ENCODE measurements at regions of chr17 and their contacts with region 1.

Region 1: DNA sequence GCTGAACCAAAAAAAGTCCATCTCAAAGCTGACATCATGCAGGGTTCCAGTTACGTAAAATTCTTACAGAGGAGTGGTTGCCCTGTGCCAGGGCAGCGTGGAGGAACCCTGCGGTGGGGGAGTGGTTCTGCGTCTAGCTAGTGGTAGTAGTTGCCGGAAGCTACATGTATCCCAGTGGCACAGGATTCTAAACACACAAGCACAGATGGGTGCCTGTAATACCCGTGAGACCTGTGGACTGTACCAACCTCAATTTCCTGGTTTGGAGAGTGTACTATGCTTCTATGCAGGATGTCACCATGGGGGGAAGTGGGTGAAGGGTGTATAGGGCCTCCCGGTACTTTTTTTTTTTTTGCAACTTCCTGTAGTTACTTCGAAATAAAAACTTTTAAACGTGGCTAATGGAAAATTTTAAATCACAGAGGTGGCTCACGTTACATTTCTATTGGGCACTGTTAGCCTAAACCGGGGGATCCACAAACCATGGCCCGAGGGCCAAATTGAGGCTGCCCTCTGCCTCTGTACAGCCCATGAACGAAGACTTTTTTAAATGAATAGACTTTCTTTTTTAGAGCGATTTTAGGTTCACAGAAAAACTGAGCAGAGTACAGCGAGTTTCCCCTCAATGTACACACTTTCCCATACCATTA is 38.5 kb downstream of the TBC1D16 start:
- DNase-seq: peak; percentile 41 to 94 (median 86)
- ATAC-seq: peak; percentile 96 to 99 (median 99)
- H3K4me3 ChIP-seq: peak overlapping the region in 1 of 2 donors; percentile 42
- H3K4me3 Mint-ChIP-seq: peak overlapping the region; percentile 68 to 80 (median 75)
- H3K27ac ChIP-seq: peak overlapping the region; percentile 93
- H3K27ac Mint-ChIP-seq: peak overlapping the region; percentile 95 to 99
- H3K4me1 ChIP-seq: peaks cover 42 to 60% of the 10 kb centered on the region in 2 experiments
- H3K4me1 Mint-ChIP-seq: peaks cover 44 to 60% (median 48%) of the 10 kb centered on the region in 3 donors
- H3K27me3 ChIP-seq: peaks cover 0 to 16% of the 10 kb centered on the region in 2 experiments
- H3K27me3 Mint-ChIP-seq: no peaks in the 10 kb centered on the region

Region 2: DNA sequence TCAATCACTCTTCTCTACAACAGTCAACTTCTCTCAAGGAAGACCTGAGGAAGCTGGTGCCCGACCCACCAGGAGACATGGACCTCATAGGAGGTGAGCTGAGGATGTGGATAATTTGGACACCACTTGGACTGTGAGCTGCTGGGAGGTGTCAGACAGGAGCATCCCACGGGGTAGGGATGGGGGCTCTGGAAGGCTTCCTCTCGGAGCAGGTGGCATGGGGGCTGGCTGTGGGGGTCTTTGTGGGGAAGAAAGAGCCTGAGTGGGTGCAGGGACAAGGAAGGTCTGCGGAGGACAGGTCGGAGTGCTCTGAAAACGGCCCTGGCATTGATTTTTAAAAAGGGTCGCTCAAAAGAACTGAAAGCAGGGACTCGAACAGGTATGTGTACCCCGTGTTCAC is 25.5 kb before region 1 on chr17:
- CTCF ChIA-PET with region 1: interaction called in 1 of 2 experiments, 11 read pairs
- POLR2A ChIA-PET with region 1: interaction called in 1 of 2 experiments, 8 read pairs
- DNase-seq: no peak
- ATAC-seq: no peak
- H3K4me3 ChIP-seq: no peak overlapping the region
- H3K4me3 Mint-ChIP-seq: no peak overlapping the region
- H3K27ac ChIP-seq: no peak overlapping the region
- H3K27ac Mint-ChIP-seq: no peak overlapping the region
- H3K4me1 ChIP-seq: peaks cover 0 to 5% of the 10 kb centered on the region in 2 experiments
- H3K4me1 Mint-ChIP-seq: peaks cover 0 to 7% (median 0%) of the 10 kb centered on the region in 3 donors
- H3K27me3 ChIP-seq: peaks cover 0 to 41% of the 10 kb centered on the region in 2 experiments
- H3K27me3 Mint-ChIP-seq: peaks cover 4 to 5% of the 10 kb centered on the region in 2 donors

Region 3: GRCh38 chr17:80008383-80008840 is 11.3 kb after region 1 on chr17:
- CTCF ChIA-PET with region 1: interaction called, 3 to 15 read pairs
- POLR2A ChIA-PET with region 1: interaction called in 1 of 2 experiments, 3 read pairs
- DNase-seq: peak; percentile 24 to 81 (median 61)
- ATAC-seq: peak; percentile 78 to 87 (median 82)
- H3K4me3 ChIP-seq: no peak overlapping the region
- H3K4me3 Mint-ChIP-seq: no peak overlapping the region
- H3K27ac ChIP-seq: no peak overlapping the region
- H3K27ac Mint-ChIP-seq: no peak overlapping the region
- H3K4me1 ChIP-seq: peaks cover 0 to 18% of the 10 kb centered on the region in 2 experiments
- H3K4me1 Mint-ChIP-seq: peaks cover 10 to 12% (median 10%) of the 10 kb centered on the region in 3 donors
- H3K27me3 ChIP-seq: peaks cover 0 to 12% of the 10 kb centered on the region in 2 experiments
- H3K27me3 Mint-ChIP-seq: no peaks in the 10 kb centered on the region

Region 4: DNA sequence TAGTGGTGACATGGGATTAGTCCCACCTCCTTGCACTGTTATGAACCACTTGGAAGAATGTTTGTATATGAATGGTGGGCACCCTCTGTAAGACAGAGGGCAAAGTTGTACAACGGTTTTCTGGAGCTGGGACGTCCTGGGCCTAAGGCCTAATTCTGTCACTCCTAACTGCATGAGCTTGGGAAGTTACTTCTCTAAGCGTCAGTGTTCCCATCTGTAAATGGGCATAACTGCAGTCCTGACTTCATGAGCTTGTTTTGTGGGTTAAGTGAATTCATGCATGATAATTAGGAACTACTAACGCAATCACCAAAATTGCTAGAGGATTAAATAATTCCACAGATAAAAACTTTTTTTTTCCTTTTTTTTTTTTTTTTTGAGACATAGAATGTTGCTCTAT is 36.7 kb after region 1 on chr17:
- CTCF ChIA-PET with region 1: interaction called in 1 of 2 experiments, 7 read pairs
- POLR2A ChIA-PET with region 1: interaction called in 1 of 2 experiments, 12 read pairs
- DNase-seq: no peak
- ATAC-seq: no peak
- H3K4me3 ChIP-seq: no peak overlapping the region
- H3K4me3 Mint-ChIP-seq: peak overlapping the region; percentile 44 to 92 (median 49)
- H3K27ac ChIP-seq: no peak overlapping the region
- H3K27ac Mint-ChIP-seq: no peak overlapping the region
- H3K4me1 ChIP-seq: peaks cover 3 to 21% of the 10 kb centered on the region in 2 experiments
- H3K4me1 Mint-ChIP-seq: peaks cover 10 to 17% (median 11%) of the 10 kb centered on the region in 3 donors
- H3K27me3 ChIP-seq: peaks cover 0 to 22% of the 10 kb centered on the region in 2 experiments
- H3K27me3 Mint-ChIP-seq: peaks cover 4 to 12% of the 10 kb centered on the region in 2 donors

Region 5: GRCh38 chr17:80080081-80080480 is 82.9 kb after region 1 on chr17:
- CTCF ChIA-PET with region 1: no interaction called
- POLR2A ChIA-PET with region 1: no interaction called
- DNase-seq: no peak
- ATAC-seq: no peak
- H3K4me3 ChIP-seq: no peak overlapping the region
- H3K4me3 Mint-ChIP-seq: no peak overlapping the region
- H3K27ac ChIP-seq: no peak overlapping the region
- H3K27ac Mint-ChIP-seq: no peak overlapping the region
- H3K4me1 ChIP-seq: peaks cover 0 to 8% of the 10 kb centered on the region in 2 experiments
- H3K4me1 Mint-ChIP-seq: peaks cover 2 to 6% (median 4%) of the 10 kb centered on the region in 3 donors
- H3K27me3 ChIP-seq: peaks cover 0 to 30% of the 10 kb centered on the region in 2 experiments
- H3K27me3 Mint-ChIP-seq: peaks cover 3 to 5% of the 10 kb centered on the region in 2 donors

Region 6: DNA sequence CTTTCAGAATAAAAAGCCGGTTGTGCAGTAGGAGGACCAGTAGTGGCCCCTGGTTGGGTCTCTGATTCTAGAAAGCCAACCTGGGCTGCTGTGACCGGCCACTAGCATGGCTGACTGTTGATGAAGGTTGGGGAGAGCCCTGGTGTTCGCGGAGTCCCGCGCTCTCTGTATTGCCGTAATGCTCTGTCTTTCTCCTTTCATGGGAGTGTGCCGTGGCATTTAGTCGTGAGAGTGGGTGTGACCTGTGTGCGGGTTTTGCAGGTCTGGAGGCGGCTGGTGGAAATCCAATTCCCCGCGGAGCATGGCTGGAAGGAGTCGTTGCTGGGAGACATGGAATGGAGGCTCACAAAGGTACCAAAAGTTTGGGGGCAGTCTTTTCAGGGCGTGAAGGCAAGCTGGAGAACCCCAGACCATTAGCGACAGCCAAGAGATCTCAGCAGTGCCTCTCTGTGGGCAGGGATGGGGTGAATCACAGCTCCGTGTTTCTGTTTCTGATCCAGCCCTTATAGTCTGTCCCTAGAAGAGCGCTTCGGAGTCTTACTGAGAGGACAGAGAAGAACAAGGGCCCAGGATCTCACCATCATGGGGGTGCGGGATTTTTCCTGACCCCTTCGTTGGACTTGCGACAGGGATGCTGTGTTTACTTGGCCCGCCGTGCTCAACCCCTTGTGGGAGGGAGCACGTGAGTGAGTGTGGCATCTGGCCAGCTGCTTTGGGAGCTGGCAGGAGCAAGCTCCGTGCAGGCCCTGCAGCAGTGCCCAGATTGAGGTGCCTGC is 320.0 kb after region 1 on chr17:
- CTCF ChIA-PET with region 1: no interaction called
- POLR2A ChIA-PET with region 1: no interaction called
- DNase-seq: no peak
- ATAC-seq: no peak
- H3K4me3 ChIP-seq: no peak overlapping the region
- H3K4me3 Mint-ChIP-seq: no peak overlapping the region
- H3K27ac ChIP-seq: no peak overlapping the region
- H3K27ac Mint-ChIP-seq: peak overlapping the region in 1 of 2 donors; percentile 44
- H3K4me1 ChIP-seq: no peaks in the 10 kb centered on the region
- H3K4me1 Mint-ChIP-seq: peaks cover 2 to 14% (median 2%) of the 10 kb centered on the region in 3 donors
- H3K27me3 ChIP-seq: no peaks in the 10 kb centered on the region
- H3K27me3 Mint-ChIP-seq: no peaks in the 10 kb centered on the region

Measured in T-cell (primary cell).